ENCODE measurements at regions of chr12 and their contacts with region 1.

Region 1: GRCh38 chr12:50187084-50187900 is 20.1 kb upstream of the CERS5 start:
- DNase-seq: peak in 1 of 14 experiments; percentile 4
- ATAC-seq: peak; percentile 39
- H3K4me3 ChIP-seq: no peak overlapping the region
- H3K4me3 Mint-ChIP-seq: no peak overlapping the region
- H3K27ac ChIP-seq: no peak overlapping the region
- H3K27ac Mint-ChIP-seq: peak overlapping the region; percentile 57
- H3K4me1 ChIP-seq: peaks cover 24% of the 10 kb centered on the region
- H3K4me1 Mint-ChIP-seq: peaks cover 26% of the 10 kb centered on the region
- H3K27me3 ChIP-seq: no peaks in the 10 kb centered on the region
- H3K27me3 Mint-ChIP-seq: no peaks in the 10 kb centered on the region
- CTCF ChIP-seq: no peak

Region 2: GRCh38 chr12:50314629-50315312 is 127.5 kb after region 1 on chr12:
- CTCF ChIA-PET with region 1: no interaction called
- POLR2A ChIA-PET with region 1: no interaction called
- intact Hi-C with region 1: loop called in 1 of 2 experiments (anchors 10 kb)
- DNase-seq: peak in 3 of 14 experiments; percentile 11 to 18 (median 16)
- ATAC-seq: no peak
- H3K4me3 ChIP-seq: no peak overlapping the region
- H3K4me3 Mint-ChIP-seq: no peak overlapping the region
- H3K27ac ChIP-seq: no peak overlapping the region
- H3K27ac Mint-ChIP-seq: no peak overlapping the region
- H3K4me1 ChIP-seq: no peaks in the 10 kb centered on the region
- H3K4me1 Mint-ChIP-seq: no peaks in the 10 kb centered on the region
- H3K27me3 ChIP-seq: no peaks in the 10 kb centered on the region
- H3K27me3 Mint-ChIP-seq: no peaks in the 10 kb centered on the region
- CTCF ChIP-seq: peak; percentile 52